ENCODE measurements at regions of chr10 and their contacts with region 1.

Region 1: GRCh38 chr10:102185811-102186527 is 33.8 kb downstream of the NOLC1 start:
- DNase-seq: peak; percentile 40
- ATAC-seq: peak; percentile 39
- H3K4me3 ChIP-seq: no peak overlapping the region
- H3K4me3 Mint-ChIP-seq: no peak overlapping the region
- H3K27ac ChIP-seq: no peak overlapping the region
- H3K27ac Mint-ChIP-seq: no peak overlapping the region
- H3K4me1 ChIP-seq: peaks cover 0 to 7% of the 10 kb centered on the region in 2 donors
- H3K4me1 Mint-ChIP-seq: peaks cover 9% of the 10 kb centered on the region
- H3K27me3 ChIP-seq: no peaks in the 10 kb centered on the region
- H3K27me3 Mint-ChIP-seq: peaks cover 2% of the 10 kb centered on the region
- CTCF ChIP-seq: no peak

Region 2: DNA sequence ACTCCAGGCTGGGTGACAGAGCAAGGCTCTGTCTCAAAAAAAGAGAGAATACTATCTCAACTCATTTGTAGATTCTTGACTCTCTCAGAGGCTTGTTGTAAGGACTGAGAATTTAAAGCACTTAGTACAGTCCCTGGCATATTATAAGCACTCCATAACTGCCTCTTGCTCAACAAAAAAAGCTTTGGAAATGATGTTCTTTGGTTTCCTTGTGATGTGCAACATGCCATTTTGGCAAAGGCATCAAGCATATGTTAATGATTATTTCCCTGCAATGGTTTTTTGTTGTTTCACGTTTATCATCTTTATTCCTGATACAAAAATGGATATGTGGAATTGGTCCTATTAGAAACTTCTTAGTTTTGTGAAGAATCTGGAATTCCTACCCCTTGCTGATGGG is 18.1 kb before region 1 on chr10:
- CTCF ChIA-PET with region 1: interaction called, 10 read pairs
- POLR2A ChIA-PET with region 1: no interaction called
- intact Hi-C with region 1: no loop called
- DNase-seq: no peak
- ATAC-seq: no peak
- H3K4me3 ChIP-seq: no peak overlapping the region
- H3K4me3 Mint-ChIP-seq: no peak overlapping the region
- H3K27ac ChIP-seq: no peak overlapping the region
- H3K27ac Mint-ChIP-seq: no peak overlapping the region
- H3K4me1 ChIP-seq: peaks cover 7 to 8% of the 10 kb centered on the region in 2 donors
- H3K4me1 Mint-ChIP-seq: peaks cover 6% of the 10 kb centered on the region
- H3K27me3 ChIP-seq: no peaks in the 10 kb centered on the region
- H3K27me3 Mint-ChIP-seq: no peaks in the 10 kb centered on the region
- CTCF ChIP-seq: no peak

Measured in B cell (primary cell).